SK-N-SH (cell line): ENCODE measurements at regions of chr2 and their contacts with region 1.

Region 1: GRCh38 chr2:86035883-86036668 is 69.6 kb downstream of the POLR1A start:
- DNase-seq: peak; percentile 63
- H3K4me3 ChIP-seq: no peak overlapping the region
- H3K27ac ChIP-seq: peak overlapping the region; percentile 10 to 44; a peak in 3 of 4 replicates
- H3K4me1 ChIP-seq: peaks cover 11 to 36% of the 10 kb centered on the region in 2 experiments
- H3K27me3 ChIP-seq: no peaks in the 10 kb centered on the region
- CTCF ChIP-seq: no peak
- EP300 ChIP-seq: no peak
- RAD21 ChIP-seq: no peak

Region 2: DNA sequence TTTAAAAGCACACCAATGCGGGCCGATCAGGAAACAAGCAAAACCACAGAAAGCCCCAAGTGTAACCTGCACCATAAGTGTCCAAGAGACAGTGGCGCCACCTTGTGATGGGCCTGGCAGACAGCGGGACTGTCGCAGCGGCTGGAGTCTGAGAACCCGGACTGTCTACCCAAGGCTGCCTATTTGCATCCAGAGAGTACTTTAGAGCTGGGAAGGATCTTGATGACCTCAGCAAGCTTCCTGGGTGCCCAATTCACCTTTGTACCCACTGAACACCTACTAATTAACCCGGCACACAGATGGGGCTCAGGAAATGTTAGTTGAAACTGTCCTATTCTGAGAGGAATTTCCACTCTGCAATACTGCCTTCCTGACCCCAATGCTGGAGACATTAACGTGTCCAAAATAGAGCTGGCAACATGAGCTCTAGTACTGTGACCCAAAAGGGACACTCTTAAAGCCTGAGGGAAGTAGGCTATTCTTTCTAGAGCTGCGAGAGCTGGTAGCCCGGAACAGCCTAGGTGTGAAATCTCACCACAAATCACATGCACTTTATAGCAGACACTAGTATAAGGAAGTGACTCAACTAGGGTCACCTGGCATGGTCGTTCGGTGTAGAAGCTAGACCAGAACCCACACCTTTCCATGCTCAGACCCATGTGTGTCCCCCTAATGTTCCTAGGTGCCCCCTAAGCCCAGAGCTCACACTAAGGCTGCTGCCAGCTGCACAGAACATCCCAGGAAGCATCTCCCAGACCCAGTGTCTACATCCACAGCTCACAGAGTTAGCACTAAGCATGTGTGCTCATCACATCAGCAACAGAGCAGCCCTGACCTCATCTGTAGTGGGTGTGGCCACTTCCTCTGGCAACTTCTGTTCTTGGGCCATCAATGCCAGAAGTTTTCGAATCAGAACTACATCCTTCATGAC is 44.2 kb after region 1 on chr2:
- CTCF ChIA-PET with region 1: interaction called, 15 read pairs
- POLR2A ChIA-PET with region 1: no interaction called
- DNase-seq: peak; percentile 69
- H3K4me3 ChIP-seq: peak overlapping the region in 1 of 2 experiments; percentile 17; a peak in 1 of 4 replicates
- H3K27ac ChIP-seq: no peak overlapping the region
- H3K4me1 ChIP-seq: no peaks in the 10 kb centered on the region
- H3K27me3 ChIP-seq: no peaks in the 10 kb centered on the region
- CTCF ChIP-seq: peak; percentile 86
- EP300 ChIP-seq: no peak
- RAD21 ChIP-seq: peak; percentile 81